GM13976 (cell line): ENCODE measurements at regions of chr21 and their contacts with region 1.

Region 1: DNA sequence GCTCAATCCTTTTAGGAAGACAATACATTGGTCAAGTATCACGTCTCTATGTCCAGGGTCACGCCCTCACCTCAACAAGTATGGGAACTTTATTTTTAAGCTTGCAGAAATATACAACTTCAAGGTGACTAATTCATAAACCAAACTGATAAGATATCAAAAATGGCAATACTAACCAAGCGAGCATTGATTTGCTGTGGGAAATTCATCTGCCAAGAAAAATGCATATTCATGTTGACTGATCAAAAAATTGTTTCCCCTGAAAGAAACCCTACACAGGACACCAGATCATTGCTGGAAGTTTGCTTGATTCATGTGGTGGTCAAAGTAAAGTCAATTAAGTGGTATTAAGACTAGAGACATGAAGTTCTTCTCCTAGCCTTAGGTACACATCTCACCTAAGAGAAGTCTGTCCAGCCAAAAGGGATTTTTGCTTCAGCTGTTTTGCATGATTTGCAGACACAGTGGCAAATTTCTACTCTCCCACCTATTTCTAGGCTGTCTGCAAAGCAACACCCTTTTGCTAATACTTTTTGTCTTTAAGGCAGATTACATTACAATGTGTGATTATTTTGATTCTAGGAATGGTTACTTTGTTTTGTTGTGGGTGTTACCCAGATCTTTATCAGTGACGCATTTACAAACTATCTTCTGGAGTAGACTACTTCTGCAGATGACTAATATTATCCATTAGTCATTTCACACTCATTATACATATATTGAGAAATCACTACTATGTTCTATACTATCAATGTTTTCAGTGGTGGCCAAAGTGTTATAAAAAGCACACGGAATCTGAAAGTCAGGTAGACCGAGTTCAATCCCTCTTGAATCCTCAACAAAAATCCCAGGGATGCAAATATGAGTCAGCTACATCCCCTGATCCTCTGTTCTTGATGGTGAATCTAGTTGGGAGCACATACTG is 12.3 kb downstream of the SAMSN1 start:
- DNase-seq: peak; percentile 49
- CTCF ChIP-seq: no peak

Region 2: DNA sequence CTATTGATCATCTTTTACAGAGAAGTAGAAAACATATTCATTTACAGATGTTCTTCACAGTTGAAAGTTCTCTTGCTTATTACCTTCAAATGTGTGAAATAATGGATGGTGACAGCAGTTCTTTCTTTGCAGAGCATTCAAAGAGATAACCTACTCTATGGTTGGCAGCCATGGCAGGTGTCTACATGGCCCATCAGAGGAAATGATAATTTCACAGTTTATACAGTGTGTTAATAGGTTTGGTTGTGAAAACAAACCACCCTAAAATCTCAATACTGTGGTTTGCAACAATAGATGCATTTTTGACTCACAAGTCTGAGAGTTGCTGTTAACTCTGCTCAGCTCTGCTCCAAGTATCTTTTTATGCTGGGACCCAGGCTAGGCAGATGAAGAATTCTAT is 253.5 kb after region 1 on chr21:
- in situ Hi-C with region 1: no loop called
- DNase-seq: no peak
- CTCF ChIP-seq: no peak

Region 3: GRCh38 chr21:14864211-14865021 is 330.6 kb after region 1 on chr21:
- in situ Hi-C with region 1: no loop called
- DNase-seq: no peak
- CTCF ChIP-seq: peak; percentile 83

Region 4: DNA sequence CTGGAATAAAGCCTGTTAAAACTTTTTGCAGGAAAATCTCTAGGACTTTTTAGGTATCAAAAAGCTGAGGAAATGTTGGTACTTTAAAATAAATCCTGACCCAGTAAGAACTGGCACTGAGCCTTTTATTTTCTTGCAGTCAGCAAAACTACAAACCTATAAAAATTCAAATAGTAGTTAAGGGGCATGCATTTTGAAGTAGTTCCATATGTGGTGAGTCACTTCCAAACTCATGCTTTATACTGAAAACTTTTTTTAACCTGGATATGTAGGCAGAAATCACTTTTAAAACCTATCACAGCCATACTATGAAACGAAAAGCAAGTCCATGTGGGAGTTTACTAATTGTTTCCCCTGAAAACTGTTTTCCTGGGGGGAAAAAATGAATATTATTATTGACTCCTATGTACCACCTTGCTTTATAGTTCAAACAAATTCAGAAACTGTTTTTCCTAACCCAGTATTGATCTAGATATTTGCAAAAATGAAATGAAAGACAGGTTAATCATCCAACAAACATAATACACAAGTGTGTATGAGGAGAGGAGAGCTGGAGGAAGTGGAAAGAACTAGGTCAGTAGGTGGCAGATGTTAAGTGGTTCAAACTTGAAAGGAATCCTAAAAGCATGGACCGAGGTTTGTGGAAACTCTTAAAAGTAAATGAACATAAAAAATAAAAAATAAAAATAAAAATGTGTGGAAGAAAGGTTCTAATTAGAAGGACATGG is 500.5 kb after region 1 on chr21:
- in situ Hi-C with region 1: loop called (anchors 25 kb)
- DNase-seq: no peak
- CTCF ChIP-seq: no peak